Right ventricle myocardium inferior (tissue), 1 donor: ENCODE measurements at regions of chr9 and their contacts with region 1.

Region 1: GRCh38 chr9:33851301-33851700 is 34.3 kb downstream of the UBE2R2 start:
- DNase-seq: no peak
- ATAC-seq: no peak

Region 2: DNA sequence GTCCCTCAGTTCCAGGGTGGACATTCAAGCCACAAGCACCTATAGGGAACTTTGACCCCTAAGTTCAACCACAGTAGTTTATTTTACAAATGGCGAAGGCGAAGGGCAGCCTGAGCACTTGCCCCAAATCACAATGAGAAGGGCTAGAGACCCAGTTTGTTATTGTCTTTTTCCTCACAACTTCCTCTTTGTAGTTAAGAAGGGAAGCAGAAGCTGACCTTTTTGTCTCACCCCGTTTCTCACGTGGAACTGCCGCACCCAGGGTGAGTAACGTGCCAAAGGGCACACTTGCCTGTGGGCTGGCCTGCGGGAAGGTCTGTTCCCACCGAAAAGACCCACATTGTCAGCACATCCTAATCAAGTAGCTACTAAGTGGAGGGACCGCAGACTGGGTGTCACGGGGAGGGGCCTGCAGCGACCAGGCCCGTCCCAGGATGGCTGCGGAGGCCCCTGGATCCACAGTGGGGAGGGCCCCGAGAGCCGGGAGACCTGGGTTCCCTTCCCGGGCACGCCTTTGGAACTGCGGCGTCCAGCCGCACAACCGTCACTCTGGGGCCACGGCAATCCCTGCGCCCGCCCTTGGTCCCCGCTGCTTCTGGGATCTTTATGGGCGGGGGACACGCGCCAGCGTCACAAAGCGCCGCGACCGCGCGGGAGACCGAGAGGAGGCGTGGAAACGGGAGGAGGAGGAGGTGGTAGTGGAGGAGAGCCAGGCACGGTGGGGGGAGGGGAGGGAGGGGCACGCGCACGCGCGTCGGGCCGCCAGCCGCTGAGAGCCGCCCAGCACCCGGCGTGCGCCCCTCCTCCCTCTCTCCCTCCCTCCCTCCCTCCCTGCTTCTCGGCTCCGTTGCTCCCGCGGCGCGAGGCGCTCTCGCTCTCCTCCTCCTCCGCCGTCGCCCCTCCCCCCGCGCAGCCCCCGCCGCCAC is 34.7 kb before region 1 on chr9 and contains the start of gene UBE2R2:
- intact Hi-C with region 1: loop called (anchors 2 kb)
- DNase-seq: peak; percentile 97
- ATAC-seq: peak; percentile 90
- total RNA-seq, gene UBE2R2: 44.0 TPM